AG04449 (cell line): ENCODE measurements at regions of chr1 and their contacts with region 1.

Region 1: GRCh38 chr1:39672551-39672947 is 642 bp upstream of the NT5C1A start:
- DNase-seq: no peak
- H3K4me3 ChIP-seq: peak overlapping the region; percentile 47
- CTCF ChIP-seq: peak; percentile 50

Region 2: GRCh38 chr1:39646232-39647081 is 26.1 kb before region 1 on chr1:
- CTCF ChIA-PET with region 1: interaction called, 11 read pairs
- POLR2A ChIA-PET with region 1: no interaction called
- DNase-seq: no peak
- H3K4me3 ChIP-seq: no peak overlapping the region
- CTCF ChIP-seq: no peak

Region 3: DNA sequence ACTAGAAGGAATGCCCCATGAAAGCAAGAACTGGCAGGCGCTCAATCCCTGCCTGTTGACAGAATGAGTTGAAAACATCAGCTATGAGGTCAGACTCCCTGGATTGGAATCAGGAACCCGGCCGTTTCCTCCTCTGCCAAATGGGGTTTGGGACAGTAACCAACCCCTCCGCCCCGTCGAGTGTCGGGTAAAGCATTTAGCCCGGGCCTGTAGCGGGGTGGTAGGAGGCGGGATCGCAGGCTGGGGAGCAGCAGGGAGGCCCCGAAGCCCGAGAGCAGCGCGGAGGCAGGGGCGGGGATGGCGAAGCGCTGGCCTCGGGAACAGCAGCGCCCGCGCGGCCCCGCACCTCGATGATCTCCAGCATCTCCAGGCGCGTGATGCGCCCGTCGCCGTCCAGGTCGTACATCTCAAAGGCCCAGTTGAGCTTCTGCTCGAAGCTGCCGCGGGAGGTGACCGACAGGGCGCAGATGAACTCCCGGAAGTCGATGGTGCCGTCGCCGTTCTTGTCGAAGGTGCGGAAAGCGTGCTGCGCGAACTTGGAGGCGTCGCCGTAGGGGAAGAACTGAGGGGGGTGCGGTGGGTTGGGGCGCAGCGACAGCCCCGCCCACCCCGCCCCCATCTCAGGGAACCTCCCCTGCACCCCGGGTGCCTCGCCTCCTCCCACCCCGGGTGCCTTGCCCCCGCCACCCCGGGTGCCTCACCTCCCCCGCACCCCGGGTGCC is 11.2 kb after region 1 on chr1:
- CTCF ChIA-PET with region 1: interaction called, 19 read pairs
- POLR2A ChIA-PET with region 1: no interaction called
- DNase-seq: no peak
- H3K4me3 ChIP-seq: no peak overlapping the region
- CTCF ChIP-seq: no peak

Region 4: GRCh38 chr1:39691262-39692151 is 19.0 kb after region 1 on chr1 and contains the start of gene HPCAL4:
- CTCF ChIA-PET with region 1: interaction called, 34 read pairs
- POLR2A ChIA-PET with region 1: no interaction called
- DNase-seq: no peak
- H3K4me3 ChIP-seq: peak within 1 kb of the TSS; percentile 28
- CTCF ChIP-seq: no peak

Region 5: GRCh38 chr1:39701049-39701439 is 28.5 kb after region 1 on chr1:
- CTCF ChIA-PET with region 1: interaction called, 34 read pairs
- POLR2A ChIA-PET with region 1: no interaction called
- DNase-seq: no peak
- H3K4me3 ChIP-seq: no peak overlapping the region
- CTCF ChIP-seq: no peak

Region 6: GRCh38 chr1:39720094-39720999 is 47.8 kb after region 1 on chr1:
- CTCF ChIA-PET with region 1: interaction called, 11 read pairs
- POLR2A ChIA-PET with region 1: no interaction called
- DNase-seq: no peak
- H3K4me3 ChIP-seq: no peak overlapping the region
- CTCF ChIP-seq: peak; percentile 28

Region 7: DNA sequence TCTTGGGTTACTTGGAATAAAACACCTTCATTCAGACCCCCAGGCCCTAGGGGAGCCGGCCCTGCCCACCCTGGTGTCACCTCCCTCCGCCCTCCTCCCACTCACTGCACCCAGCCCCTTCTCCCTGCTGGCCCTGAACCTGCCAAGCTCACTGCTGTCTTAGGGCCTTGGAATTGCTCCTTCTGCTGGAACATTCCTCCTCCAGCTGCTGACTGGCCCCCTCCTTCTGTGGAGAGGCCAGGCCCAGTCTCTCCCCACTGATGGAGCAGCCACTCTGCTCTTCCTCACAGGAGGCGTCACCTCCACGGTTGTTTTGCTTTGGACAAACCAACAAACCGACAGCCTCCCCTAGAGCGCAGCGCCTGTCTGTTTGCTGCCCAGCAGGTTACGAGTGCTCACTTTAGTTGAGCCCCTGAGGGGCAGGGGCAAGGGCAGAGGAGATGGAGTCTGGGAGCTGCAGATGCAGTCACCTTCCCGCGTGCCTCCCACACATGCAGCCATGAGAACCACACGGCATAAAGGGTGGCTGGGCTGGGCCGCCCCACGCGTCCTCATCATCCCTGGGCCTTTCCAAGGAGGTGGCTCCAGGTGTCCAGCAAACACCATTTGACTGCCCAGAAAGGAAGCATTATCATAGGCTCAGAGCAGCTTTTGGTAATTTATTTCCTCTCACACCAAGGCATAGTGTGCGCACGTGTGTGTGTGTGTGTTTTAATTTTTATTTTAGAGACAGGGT is 89.1 kb after region 1 on chr1:
- CTCF ChIA-PET with region 1: no interaction called
- POLR2A ChIA-PET with region 1: no interaction called
- DNase-seq: no peak
- H3K4me3 ChIP-seq: no peak overlapping the region
- CTCF ChIP-seq: no peak